Heart left ventricle (tissue), 16 donors: ENCODE measurements at regions of chr21 and their contacts with region 1.

Region 1: GRCh38 chr21:37208056-37208721 is 58.9 kb downstream of the VPS26C start:
- DNase-seq: peak; percentile 78 to 91 (median 87)
- ATAC-seq: peak; percentile 91 to 95 (median 94)
- H3K4me3 ChIP-seq: peak overlapping the region in 8 of 12 donors; percentile 1 to 37 (median 22)
- H3K27ac ChIP-seq: peak overlapping the region; percentile 68 to 96 (median 88)
- H3K4me1 ChIP-seq: peaks cover 0 to 35% (median 22%) of the 10 kb centered on the region in 12 donors
- H3K27me3 ChIP-seq: no peaks in the 10 kb centered on the region
- CTCF ChIP-seq: no peak
- POLR2A ChIP-seq: no peak

Region 2: GRCh38 chr21:38012701-38013100 is 804.5 kb after region 1 on chr21:
- intact Hi-C with region 1: loop called in 1 of 10 experiments (anchors 10 kb)
- DNase-seq: no peak
- ATAC-seq: no peak
- H3K4me3 ChIP-seq: no peak overlapping the region
- H3K27ac ChIP-seq: no peak overlapping the region
- H3K4me1 ChIP-seq: no peaks in the 10 kb centered on the region
- H3K27me3 ChIP-seq: no peaks in the 10 kb centered on the region
- CTCF ChIP-seq: no peak
- POLR2A ChIP-seq: no peak